HEK293 (cell line): ENCODE measurements at regions of chr4 and their contacts with region 1.

Region 1: GRCh38 chr4:41257257-41257901 is 651 bp downstream of the UCHL1 start:
- H3K4me3 ChIP-seq: peak overlapping the region; percentile 50
- H3K27ac ChIP-seq: peak overlapping the region; percentile 86
- H3K4me1 ChIP-seq: no peaks in the 10 kb centered on the region
- CTCF ChIP-seq: no peak

Region 2: DNA sequence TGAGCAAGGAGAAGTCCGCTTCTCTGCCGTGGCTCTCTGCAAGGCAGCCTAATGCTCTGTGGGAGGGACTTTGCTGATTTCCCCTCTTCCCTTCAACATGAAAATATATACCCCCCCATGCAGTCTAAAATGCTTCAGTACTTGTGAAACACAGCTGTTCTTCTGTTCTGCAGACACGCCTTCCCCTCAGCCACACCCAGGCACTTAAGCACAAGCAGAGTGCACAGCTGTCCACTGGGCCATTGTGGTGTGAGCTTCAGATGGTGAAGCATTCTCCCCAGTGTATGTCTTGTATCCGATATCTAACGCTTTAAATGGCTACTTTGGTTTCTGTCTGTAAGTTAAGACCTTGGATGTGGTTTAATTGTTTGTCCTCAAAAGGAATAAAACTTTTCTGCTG is 10.6 kb after region 1 on chr4:
- CTCF ChIA-PET with region 1: interaction called, 3 read pairs
- POLR2A ChIA-PET with region 1: interaction called, 11 read pairs
- H3K4me3 ChIP-seq: no peak overlapping the region
- H3K27ac ChIP-seq: no peak overlapping the region
- H3K4me1 ChIP-seq: no peaks in the 10 kb centered on the region
- CTCF ChIP-seq: no peak

Region 3: DNA sequence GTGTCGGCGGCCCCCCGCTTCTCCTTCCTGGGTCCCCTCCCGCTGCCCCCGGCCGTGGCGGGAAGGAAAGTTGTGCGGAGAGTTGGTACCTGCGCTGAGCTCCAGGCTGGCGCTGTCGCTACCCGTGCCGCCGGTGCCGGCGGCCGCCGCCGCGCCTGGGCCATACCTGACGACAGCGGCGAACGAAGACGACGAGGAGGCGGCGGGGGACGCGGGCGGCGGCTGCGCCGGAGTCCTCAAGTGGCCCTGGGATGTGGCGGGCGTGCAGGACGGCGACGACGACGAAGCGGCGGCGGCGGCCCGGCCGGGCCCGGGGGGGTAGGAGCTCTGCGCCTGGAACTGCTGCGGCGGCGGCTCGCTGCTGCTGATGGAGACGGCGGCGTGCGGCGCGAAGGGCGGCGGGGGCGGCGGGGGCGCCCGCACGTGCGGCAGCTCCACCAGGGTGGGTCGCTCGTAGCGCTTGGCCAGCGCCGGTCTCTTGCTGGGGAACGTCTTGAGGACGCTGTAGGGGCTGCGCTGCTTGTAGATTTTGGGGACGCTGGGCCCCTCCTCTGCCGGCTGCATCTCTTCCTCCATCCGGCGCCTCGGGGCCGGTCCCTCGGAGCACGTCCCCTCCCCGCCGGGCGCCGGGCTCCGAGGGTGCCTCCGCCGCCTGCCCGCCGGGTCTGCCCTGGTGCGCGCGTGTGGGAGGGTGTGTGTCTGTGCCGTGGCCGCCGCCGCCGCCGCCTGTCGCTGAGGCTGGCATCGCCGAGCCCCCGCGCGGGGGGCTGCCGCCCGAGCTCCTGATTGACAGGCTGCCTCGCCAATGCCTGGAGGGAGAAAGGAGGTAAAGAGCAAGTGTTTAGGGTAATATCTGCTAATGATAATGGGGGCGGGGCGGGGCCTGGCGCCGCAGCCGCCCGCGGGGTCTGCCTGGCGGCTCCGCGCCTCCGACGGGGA is 894.5 kb after region 1 on chr4:
- CTCF ChIA-PET with region 1: no interaction called
- POLR2A ChIA-PET with region 1: no interaction called
- H3K4me3 ChIP-seq: peak overlapping the region; percentile 62
- H3K27ac ChIP-seq: peak overlapping the region; percentile 53; the same call in 1 of the 2 replicates
- H3K4me1 ChIP-seq: no peaks in the 10 kb centered on the region; the same call in 1 of the 2 replicates
- CTCF ChIP-seq: no peak